Endothelial cell of umbilical vein (primary cell): ENCODE measurements at regions of chrX and their contacts with region 1.

Region 1: GRCh38 chrX:130120746-130121504 is 10.6 kb upstream of the ELF4 start:
- DNase-seq: peak; percentile 75
- H3K4me3 ChIP-seq: peak overlapping the region in 1 of 3 experiments; percentile 30
- H3K27ac ChIP-seq: peak overlapping the region; percentile 82
- H3K4me1 ChIP-seq: peaks cover 40% of the 10 kb centered on the region
- H3K27me3 ChIP-seq: no peaks in the 10 kb centered on the region
- CTCF ChIP-seq: peak; percentile 57 to 62
- POLR2A ChIP-seq: peak; percentile 41

Region 2: GRCh38 chrX:130086447-130087206 is 34.3 kb before region 1 on chrX:
- CTCF ChIA-PET with region 1: interaction called, 65 read pairs
- POLR2A ChIA-PET with region 1: interaction called, 3 read pairs
- dilution Hi-C with region 1: no loop called
- intact Hi-C with region 1: no loop called
- DNase-seq: no peak
- H3K4me3 ChIP-seq: no peak overlapping the region
- H3K27ac ChIP-seq: peak overlapping the region; percentile 94
- H3K4me1 ChIP-seq: peaks cover 44% of the 10 kb centered on the region
- H3K27me3 ChIP-seq: no peaks in the 10 kb centered on the region
- CTCF ChIP-seq: no peak
- POLR2A ChIP-seq: no peak

Region 3: GRCh38 chrX:130196466-130196865 is 75.5 kb after region 1 on chrX:
- CTCF ChIA-PET with region 1: interaction called, 3 read pairs
- POLR2A ChIA-PET with region 1: no interaction called
- dilution Hi-C with region 1: no loop called
- intact Hi-C with region 1: loop called (anchors 1 kb)
- DNase-seq: no peak
- H3K4me3 ChIP-seq: no peak overlapping the region
- H3K27ac ChIP-seq: no peak overlapping the region
- H3K4me1 ChIP-seq: no peaks in the 10 kb centered on the region
- H3K27me3 ChIP-seq: no peaks in the 10 kb centered on the region
- CTCF ChIP-seq: no peak
- POLR2A ChIP-seq: no peak